ENCODE measurements at regions of chr20 and their contacts with region 1.

Region 1: DNA sequence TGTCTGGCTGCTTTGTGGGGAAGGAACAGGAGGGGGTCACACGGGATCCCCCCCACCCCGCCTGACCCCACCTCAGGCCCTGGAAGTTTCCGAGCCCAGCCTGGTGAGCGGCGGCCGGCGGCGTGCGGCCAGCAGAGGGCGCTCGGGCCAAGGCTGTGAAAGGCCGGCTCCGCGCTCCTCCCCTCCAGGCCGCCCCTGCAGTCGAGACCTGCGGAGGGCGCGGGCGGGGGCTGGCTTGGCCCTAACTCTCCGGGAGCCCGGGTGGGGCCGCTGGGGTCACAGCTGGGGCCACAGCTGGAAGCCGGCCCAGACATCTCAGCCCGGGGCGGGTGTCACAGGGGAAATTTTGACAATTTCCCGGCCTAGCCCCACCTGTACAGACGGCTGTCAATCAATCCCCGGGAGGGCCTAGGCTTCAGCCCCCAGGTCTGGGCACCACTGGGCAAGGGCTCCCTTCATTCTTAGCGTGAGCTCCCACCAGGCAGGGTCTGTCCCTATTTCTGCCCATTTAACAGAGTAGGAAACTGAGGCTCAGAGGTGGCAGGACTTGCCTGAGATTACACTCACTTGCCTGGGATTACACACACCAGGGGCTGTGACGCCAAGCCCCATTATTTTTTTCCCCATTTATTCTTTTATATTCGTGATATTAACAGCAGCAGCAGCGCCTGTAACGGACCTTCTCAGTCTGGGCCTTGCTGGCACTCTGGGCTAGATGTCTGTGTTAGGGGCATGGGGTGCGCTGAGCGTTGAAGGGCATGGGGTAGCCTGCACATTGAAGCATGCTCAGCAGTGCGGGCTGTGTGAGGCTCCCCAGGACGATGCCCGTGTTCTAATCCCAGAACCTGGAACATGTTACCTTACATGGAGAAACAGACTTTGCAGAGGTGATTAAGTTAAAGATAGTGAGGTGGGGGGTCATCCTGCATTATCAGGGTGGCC is 23.0 kb downstream of the ZBP1 start:
- DNase-seq: peak; percentile 80 to 87
- ATAC-seq: peak; percentile 88 to 95 (median 93)
- H3K4me3 ChIP-seq: no peak overlapping the region
- H3K4me3 Mint-ChIP-seq: no peak overlapping the region
- H3K27ac ChIP-seq: no peak overlapping the region
- H3K27ac Mint-ChIP-seq: no peak overlapping the region
- H3K4me1 ChIP-seq: peaks cover 12% of the 10 kb centered on the region
- H3K4me1 Mint-ChIP-seq: peaks cover 11 to 14% of the 10 kb centered on the region in 2 donors
- H3K27me3 ChIP-seq: no peaks in the 10 kb centered on the region
- H3K27me3 Mint-ChIP-seq: no peaks in the 10 kb centered on the region
- CTCF ChIP-seq: peak; percentile 98

Region 2: DNA sequence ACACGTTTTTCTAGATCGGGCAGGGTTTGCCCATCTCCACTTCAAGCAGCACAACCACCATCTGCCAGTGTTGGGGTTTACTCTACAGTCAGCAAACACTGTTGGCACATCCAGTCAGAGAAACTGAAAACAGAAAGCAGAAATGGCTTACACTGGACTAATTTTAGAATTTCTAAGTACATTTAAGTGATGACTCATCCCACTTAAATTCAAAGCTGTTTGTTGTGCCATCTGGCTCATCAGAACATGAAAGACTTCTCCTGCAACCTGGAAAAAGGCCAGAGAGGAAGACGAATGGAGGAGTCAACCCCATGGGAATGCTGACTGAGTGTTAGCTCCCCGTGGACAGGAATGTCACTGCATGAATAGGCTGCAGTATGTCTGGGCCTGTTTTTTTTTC is 1042.4 kb before region 1 on chr20:
- intact Hi-C with region 1: loop called (anchors 10 kb)
- DNase-seq: no peak
- ATAC-seq: no peak
- H3K4me3 ChIP-seq: no peak overlapping the region
- H3K4me3 Mint-ChIP-seq: no peak overlapping the region
- H3K27ac ChIP-seq: no peak overlapping the region
- H3K27ac Mint-ChIP-seq: no peak overlapping the region
- H3K4me1 ChIP-seq: no peaks in the 10 kb centered on the region
- H3K4me1 Mint-ChIP-seq: no peaks in the 10 kb centered on the region
- H3K27me3 ChIP-seq: no peaks in the 10 kb centered on the region
- H3K27me3 Mint-ChIP-seq: no peaks in the 10 kb centered on the region
- CTCF ChIP-seq: no peak

Region 3: GRCh38 chr20:57498425-57499400 is 98.6 kb before region 1 on chr20:
- intact Hi-C with region 1: loop called (anchors 5 kb)
- DNase-seq: peak in 1 of 2 donors; percentile 65
- ATAC-seq: peak; percentile 84 to 90 (median 87)
- H3K4me3 ChIP-seq: no peak overlapping the region
- H3K4me3 Mint-ChIP-seq: no peak overlapping the region
- H3K27ac ChIP-seq: no peak overlapping the region
- H3K27ac Mint-ChIP-seq: no peak overlapping the region
- H3K4me1 ChIP-seq: peaks cover 20% of the 10 kb centered on the region
- H3K4me1 Mint-ChIP-seq: peaks cover 11 to 13% of the 10 kb centered on the region in 2 donors
- H3K27me3 ChIP-seq: peaks cover 10% of the 10 kb centered on the region
- H3K27me3 Mint-ChIP-seq: peaks cover 29 to 57% of the 10 kb centered on the region in 2 donors
- CTCF ChIP-seq: peak; percentile 48

Region 4: DNA sequence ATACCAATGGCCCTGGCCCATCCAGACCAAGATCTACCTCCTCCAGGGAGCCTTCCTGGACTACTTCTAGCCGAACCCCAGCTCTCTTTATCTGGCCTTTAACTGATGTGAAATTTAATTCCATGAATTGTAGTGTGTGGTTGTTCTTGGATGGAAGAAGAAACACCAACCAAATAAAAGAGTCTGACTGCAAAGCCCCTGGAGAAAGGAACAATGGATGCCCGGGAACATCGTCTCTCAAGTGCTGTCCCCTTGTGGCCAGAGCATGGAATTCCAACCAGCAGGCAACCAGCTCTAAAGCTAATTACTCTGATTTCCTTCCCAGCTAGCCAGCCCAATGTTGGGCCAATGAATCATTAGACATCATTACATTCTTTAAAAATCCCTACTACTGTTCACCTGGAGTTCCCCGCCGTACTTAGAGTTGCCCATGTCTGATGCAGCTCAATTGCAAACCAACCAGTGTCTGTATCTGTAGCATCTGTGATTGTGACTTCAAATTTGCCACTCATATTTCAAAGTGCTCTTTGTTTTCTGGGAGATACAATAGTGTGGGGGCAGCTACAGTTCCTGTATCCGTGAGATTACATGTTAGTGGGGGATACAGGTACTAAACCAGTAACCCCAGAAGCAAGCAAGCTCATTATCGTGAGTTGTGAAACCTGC is 490.1 kb after region 1 on chr20:
- intact Hi-C with region 1: loop called (anchors 5 kb)
- DNase-seq: peak in 1 of 2 donors; percentile 31
- ATAC-seq: no peak
- H3K4me3 ChIP-seq: no peak overlapping the region
- H3K4me3 Mint-ChIP-seq: no peak overlapping the region
- H3K27ac ChIP-seq: no peak overlapping the region
- H3K27ac Mint-ChIP-seq: no peak overlapping the region
- H3K4me1 ChIP-seq: no peaks in the 10 kb centered on the region
- H3K4me1 Mint-ChIP-seq: no peaks in the 10 kb centered on the region
- H3K27me3 ChIP-seq: no peaks in the 10 kb centered on the region
- H3K27me3 Mint-ChIP-seq: peaks cover 0 to 3% of the 10 kb centered on the region in 2 donors
- CTCF ChIP-seq: peak; percentile 14

Region 5: GRCh38 chr20:58209652-58210397 is 612.6 kb after region 1 on chr20:
- intact Hi-C with region 1: loop called (anchors 2 kb)
- DNase-seq: peak; percentile 87 to 93
- ATAC-seq: peak; percentile 92 to 99 (median 98)
- H3K4me3 ChIP-seq: no peak overlapping the region
- H3K4me3 Mint-ChIP-seq: no peak overlapping the region
- H3K27ac ChIP-seq: no peak overlapping the region
- H3K27ac Mint-ChIP-seq: peak overlapping the region; percentile 5 to 75
- H3K4me1 ChIP-seq: peaks cover 6% of the 10 kb centered on the region
- H3K4me1 Mint-ChIP-seq: peaks cover 0 to 6% of the 10 kb centered on the region in 2 donors
- H3K27me3 ChIP-seq: no peaks in the 10 kb centered on the region
- H3K27me3 Mint-ChIP-seq: peaks cover 8 to 22% of the 10 kb centered on the region in 2 donors
- CTCF ChIP-seq: peak; percentile 100